Heart left ventricle (tissue), 16 donors: ENCODE measurements at regions of chr6 and their contacts with region 1.

Region 1: DNA sequence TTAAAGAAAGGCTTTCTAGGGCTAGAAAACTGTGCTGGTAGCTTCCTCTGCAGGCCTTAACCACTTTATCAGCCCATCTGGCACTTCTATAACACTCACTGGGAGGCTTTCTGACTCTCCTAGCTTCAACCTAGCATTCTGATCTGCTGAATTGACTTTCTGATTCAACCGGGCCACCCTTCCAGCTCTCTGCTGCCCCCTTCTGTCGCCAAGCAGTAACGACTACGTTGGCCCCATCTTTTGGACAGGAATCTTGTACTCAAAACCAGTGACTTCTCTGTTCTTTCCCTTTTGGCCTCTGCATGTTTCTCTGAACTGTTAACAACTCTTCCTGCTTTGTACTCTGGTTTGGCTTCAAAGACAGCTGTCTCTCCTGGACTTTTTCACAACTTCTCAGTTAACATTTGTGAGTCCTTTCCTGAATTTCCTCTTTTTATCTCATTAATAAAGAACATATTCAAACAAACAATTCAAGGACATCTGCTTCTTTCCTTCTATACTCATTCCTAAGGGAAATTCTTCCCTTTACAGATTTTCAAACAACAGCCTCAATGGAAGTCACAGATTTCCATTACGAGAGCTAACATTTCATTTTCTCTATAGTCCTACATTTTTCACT is 43.9 kb upstream of the FAM135A start:
- DNase-seq: peak in 4 of 5 donors; percentile 33 to 69 (median 52)
- ATAC-seq: peak; percentile 20 to 76 (median 66)
- H3K4me3 ChIP-seq: no peak overlapping the region
- H3K27ac ChIP-seq: no peak overlapping the region
- H3K4me1 ChIP-seq: no peaks in the 10 kb centered on the region
- H3K27me3 ChIP-seq: no peaks in the 10 kb centered on the region
- CTCF ChIP-seq: peak; percentile 78 to 97 (median 90)
- POLR2A ChIP-seq: no peak

Region 2: DNA sequence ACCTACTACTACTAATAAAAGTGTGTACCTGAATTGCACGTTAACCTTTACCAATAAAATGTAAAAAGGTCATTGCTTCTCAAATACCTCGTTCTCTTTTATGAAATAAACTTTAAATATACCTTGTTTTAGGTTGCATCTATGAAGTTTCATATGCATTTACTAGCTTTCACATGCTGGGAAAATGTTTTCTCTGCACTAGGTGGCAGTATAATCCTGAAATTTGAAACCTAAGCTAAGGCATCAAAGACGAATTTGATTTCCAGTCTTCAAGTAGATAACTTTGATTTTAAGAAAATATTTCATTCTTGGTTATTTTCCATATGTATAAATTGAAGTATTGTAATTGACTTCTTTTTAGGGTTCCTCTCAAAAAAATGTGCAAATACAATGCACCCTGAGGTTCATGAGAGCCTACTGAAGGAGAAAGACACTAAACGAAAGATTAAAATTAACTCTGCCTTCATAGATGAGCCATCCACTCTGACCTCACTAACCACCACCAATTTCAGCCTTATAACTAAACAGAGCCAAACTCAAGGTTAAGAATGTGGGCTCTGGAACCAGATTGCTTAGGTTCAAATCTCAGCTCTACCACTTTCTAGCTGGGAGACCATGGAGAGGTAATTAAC is 59.3 kb before region 1 on chr6:
- intact Hi-C with region 1: loop called (anchors 1 to 5 kb)
- DNase-seq: no peak
- ATAC-seq: no peak
- H3K4me3 ChIP-seq: no peak overlapping the region
- H3K27ac ChIP-seq: no peak overlapping the region
- H3K4me1 ChIP-seq: no peaks in the 10 kb centered on the region
- H3K27me3 ChIP-seq: peaks cover 0 to 9% (median 0%) of the 10 kb centered on the region in 9 donors
- CTCF ChIP-seq: peak; percentile 39 to 73 (median 58)
- POLR2A ChIP-seq: no peak

Region 3: GRCh38 chr6:70413114-70413991 is 43.9 kb after region 1 on chr6 and contains the start of gene FAM135A:
- intact Hi-C with region 1: loop called in 1 of 10 experiments (anchors 2 kb)
- DNase-seq: peak; percentile 95 to 98 (median 97)
- ATAC-seq: peak; percentile 99
- H3K4me3 ChIP-seq: peak within 1 kb of the TSS; percentile 47 to 99 (median 94)
- H3K27ac ChIP-seq: peak within 1 kb of the TSS; percentile 62 to 92 (median 80)
- H3K4me1 ChIP-seq: peaks cover 0 to 21% (median 15%) of the 10 kb centered on the region in 12 donors
- H3K27me3 ChIP-seq: no peaks in the 10 kb centered on the region
- CTCF ChIP-seq: no peak
- POLR2A ChIP-seq: peak in 1 of 2 donors; percentile 62
- total RNA-seq, gene FAM135A: 9.7 to 14.9 (median 13.2) TPM

Region 4: DNA sequence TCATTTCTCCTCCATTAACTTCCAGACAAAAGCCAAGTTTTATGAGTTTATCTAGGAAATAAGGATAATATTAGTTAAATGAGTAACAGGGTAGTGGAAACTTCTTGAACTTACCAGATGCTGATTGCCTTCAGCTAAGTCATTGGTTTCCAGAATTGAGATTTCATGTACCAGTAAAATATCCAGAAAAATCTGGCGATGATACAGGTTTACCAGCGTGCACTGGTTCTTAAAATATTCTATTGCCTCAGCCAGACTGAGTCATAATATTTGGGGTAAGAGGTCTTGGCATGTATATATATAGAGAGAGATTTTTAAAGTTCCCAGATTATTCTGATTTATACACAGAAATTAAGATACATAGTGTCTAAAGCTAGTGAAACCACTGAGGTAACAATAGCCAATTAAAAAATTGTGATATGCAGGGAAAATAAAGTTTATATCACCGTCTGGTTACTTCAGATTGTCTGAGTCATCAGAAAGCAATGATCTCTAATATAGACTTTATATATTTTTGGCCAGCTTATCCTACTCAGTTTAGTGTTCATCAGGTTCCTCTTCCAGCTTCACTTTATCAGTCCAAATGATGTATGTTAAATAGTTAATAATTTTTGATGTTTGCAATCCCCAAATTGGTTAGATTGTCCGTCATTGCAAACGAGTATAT is 157.8 kb after region 1 on chr6:
- intact Hi-C with region 1: no loop called
- DNase-seq: no peak
- ATAC-seq: no peak
- H3K4me3 ChIP-seq: no peak overlapping the region
- H3K27ac ChIP-seq: no peak overlapping the region
- H3K4me1 ChIP-seq: no peaks in the 10 kb centered on the region
- H3K27me3 ChIP-seq: no peaks in the 10 kb centered on the region
- CTCF ChIP-seq: no peak
- POLR2A ChIP-seq: no peak